GM12878 (cell line): ENCODE measurements at regions of chr18 and their contacts with region 1.

Region 1: DNA sequence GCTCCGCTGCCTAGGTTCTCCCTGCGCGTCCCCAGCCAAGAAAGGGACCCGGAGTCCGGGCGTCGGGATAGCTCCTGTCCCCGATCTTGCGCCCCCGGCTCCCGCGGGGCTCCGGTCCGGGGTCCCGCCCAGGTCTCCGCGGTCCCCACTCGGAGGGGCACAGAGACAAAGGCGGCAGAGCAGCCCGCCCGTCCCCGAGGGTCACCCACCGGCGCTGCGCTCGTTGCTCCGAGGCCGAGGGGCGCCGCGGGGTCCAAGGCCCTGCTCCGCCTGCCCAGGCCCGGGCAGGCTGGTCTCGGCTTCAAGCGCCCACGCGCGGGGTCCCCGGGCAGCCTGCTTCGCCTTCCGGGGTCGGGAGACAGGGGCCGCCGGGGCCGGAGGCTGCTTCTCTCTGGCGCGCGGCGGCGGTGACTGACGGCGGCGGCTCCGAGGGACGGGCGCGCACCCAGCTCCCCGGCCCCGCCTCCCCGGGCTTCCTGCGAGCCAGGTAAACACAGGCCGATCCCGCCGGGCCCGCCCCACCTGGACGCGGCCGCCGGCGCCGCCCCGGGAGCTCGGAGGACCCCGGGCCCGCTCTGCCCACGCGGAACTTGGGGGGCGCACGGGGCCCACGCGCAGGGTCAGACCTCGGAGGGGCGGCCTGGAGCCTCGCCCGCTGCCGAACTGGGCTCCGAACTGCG is at the start of gene MBP:
- DNase-seq: no peak
- ATAC-seq: peak; percentile 67
- H3K4me3 ChIP-seq: peak within 1 kb of the TSS; percentile 98
- H3K27ac ChIP-seq: peak within 1 kb of the TSS; percentile 97
- H3K4me1 ChIP-seq: peaks cover 33% of the 10 kb centered on the region
- H3K27me3 ChIP-seq: no peaks in the 10 kb centered on the region
- CTCF ChIP-seq: no peak
- EP300 ChIP-seq: no peak
- POLR2A ChIP-seq: peak; percentile 82
- RAD21 ChIP-seq: no peak
- polyA plus RNA-seq, gene MBP: 12.2 to 13.3 TPM

Region 2: DNA sequence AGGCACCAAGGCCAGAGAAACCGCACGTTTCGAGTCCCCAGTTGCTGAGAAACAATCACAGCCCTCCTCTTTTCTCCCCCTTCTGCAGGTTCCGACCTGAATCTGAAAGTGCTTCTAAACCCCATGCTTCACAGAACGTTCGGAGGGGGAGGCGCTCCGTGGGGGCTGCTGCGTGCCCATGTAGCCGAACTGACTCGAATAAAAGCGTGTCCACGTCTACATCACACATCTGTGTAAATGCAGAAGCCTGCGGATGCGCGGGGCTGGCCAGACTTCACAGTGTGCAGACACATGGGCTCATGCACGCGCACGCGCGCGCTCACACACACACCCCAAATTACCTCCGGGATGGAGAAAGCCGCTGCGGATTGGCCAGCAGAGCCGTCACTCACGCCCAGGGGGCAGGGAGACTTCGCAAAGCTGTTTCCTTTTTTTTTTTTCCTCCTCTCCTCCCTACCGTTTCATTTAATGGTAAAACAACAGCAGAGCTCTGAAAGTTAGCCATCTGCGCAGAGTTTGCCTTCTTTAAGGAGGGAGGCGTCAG is 639.8 kb before region 1 on chr18:
- CTCF ChIA-PET with region 1: no interaction called
- POLR2A ChIA-PET with region 1: no interaction called
- RAD21 ChIA-PET with region 1: no interaction called
- SMC1A ChIA-PET with region 1: no interaction called
- in situ Hi-C with region 1: no loop called
- intact Hi-C with region 1: loop called (anchors 10 kb)
- DNase-seq: peak; percentile 94
- ATAC-seq: peak; percentile 80
- H3K4me3 ChIP-seq: peak overlapping the region; percentile 79
- H3K27ac ChIP-seq: peak overlapping the region; percentile 79
- H3K4me1 ChIP-seq: peaks cover 9% of the 10 kb centered on the region; the same call in 1 of the 2 replicates
- H3K27me3 ChIP-seq: no peaks in the 10 kb centered on the region
- CTCF ChIP-seq: no peak
- EP300 ChIP-seq: no peak
- POLR2A ChIP-seq: no peak; the same call in 1 of the 2 replicates
- RAD21 ChIP-seq: no peak

Region 3: GRCh38 chr18:77000527-77000926 is 132.0 kb before region 1 on chr18:
- CTCF ChIA-PET with region 1: interaction called, 5 read pairs
- POLR2A ChIA-PET with region 1: no interaction called
- RAD21 ChIA-PET with region 1: interaction called, 7 read pairs
- SMC1A ChIA-PET with region 1: interaction called, 3 read pairs
- in situ Hi-C with region 1: no loop called
- intact Hi-C with region 1: loop called (anchors 5 kb)
- DNase-seq: no peak
- ATAC-seq: peak; percentile 69
- H3K4me3 ChIP-seq: no peak overlapping the region
- H3K27ac ChIP-seq: no peak overlapping the region
- H3K4me1 ChIP-seq: no peaks in the 10 kb centered on the region
- H3K27me3 ChIP-seq: no peaks in the 10 kb centered on the region
- CTCF ChIP-seq: peak; percentile 91 to 98 (median 97)
- EP300 ChIP-seq: no peak
- POLR2A ChIP-seq: no peak
- RAD21 ChIP-seq: peak; percentile 92

Region 4: GRCh38 chr18:77061946-77062517 is 70.5 kb before region 1 on chr18:
- CTCF ChIA-PET with region 1: interaction called, 5 read pairs
- POLR2A ChIA-PET with region 1: interaction called, 8 read pairs
- RAD21 ChIA-PET with region 1: interaction called, 21 read pairs
- SMC1A ChIA-PET with region 1: interaction called, 69 read pairs
- in situ Hi-C with region 1: loop called (anchors 10 kb)
- intact Hi-C with region 1: loop called (anchors 1 kb)
- DNase-seq: no peak
- ATAC-seq: peak; percentile 65
- H3K4me3 ChIP-seq: peak overlapping the region; percentile 2; the same call in 1 of the 2 replicates
- H3K27ac ChIP-seq: peak overlapping the region; percentile 97
- H3K4me1 ChIP-seq: peaks cover 61% of the 10 kb centered on the region
- H3K27me3 ChIP-seq: no peaks in the 10 kb centered on the region
- CTCF ChIP-seq: peak in 2 of 3 experiments; percentile 16 to 26; a peak in 2 of 6 replicates
- EP300 ChIP-seq: no peak
- POLR2A ChIP-seq: no peak; the same call in 1 of the 2 replicates
- RAD21 ChIP-seq: peak; percentile 24; the same call in 1 of the 2 replicates

Region 5: DNA sequence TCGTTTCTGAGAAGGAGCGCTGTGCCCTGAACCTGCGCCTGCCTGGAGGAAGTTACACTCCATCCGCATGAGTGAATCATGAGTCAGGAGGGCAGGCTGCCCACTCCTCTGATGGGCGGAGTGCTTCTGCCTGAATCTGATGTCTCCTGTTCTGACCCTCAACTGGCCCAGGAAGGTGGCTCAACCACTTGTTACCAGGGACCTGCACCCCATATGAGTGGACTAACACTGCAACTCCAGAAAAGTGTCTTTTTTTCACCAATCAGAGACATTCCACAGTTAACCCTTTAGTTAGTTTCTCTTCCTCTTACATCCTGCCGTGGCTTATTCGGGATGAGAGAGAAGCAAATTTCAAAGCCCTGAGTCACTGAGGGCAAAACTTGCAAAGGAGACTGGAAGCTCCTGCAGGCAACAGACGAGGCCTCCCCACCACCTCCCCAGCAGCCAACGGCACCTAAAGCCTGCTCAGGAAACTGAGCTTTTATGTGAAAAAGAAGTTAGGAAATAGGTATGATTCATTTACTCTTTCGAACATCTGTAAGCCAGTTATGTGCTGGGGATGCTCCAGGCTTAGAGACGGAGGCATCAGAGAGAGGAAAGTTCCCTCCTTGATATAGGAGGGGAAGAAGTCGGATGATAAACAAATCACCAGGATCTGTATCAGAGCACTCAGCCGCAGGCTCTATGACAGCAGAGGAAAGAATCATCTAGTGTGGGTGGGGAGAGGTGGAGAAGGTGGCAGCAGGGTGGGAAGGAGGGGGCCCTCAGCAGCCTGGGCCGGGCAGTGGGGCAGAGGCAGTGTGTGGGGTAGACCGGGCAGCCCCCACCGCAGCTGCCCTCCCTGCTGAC is 30.9 kb before region 1 on chr18:
- CTCF ChIA-PET with region 1: interaction called, 17 read pairs
- POLR2A ChIA-PET with region 1: interaction called, 45 read pairs
- RAD21 ChIA-PET with region 1: interaction called, 73 read pairs
- SMC1A ChIA-PET with region 1: interaction called, 27 read pairs
- in situ Hi-C with region 1: no loop called
- intact Hi-C with region 1: loop called (anchors 1 kb)
- DNase-seq: peak; percentile 61
- ATAC-seq: peak; percentile 86
- H3K4me3 ChIP-seq: peak overlapping the region; percentile 56
- H3K27ac ChIP-seq: peak overlapping the region; percentile 99
- H3K4me1 ChIP-seq: peaks cover 80% of the 10 kb centered on the region
- H3K27me3 ChIP-seq: no peaks in the 10 kb centered on the region
- CTCF ChIP-seq: no peak
- EP300 ChIP-seq: 0 out of 4 replicates have a peak, but pooled peaks of 1 of the 2 experiments have one; percentile 52
- POLR2A ChIP-seq: peak; percentile 56
- RAD21 ChIP-seq: no peak

Region 6: DNA sequence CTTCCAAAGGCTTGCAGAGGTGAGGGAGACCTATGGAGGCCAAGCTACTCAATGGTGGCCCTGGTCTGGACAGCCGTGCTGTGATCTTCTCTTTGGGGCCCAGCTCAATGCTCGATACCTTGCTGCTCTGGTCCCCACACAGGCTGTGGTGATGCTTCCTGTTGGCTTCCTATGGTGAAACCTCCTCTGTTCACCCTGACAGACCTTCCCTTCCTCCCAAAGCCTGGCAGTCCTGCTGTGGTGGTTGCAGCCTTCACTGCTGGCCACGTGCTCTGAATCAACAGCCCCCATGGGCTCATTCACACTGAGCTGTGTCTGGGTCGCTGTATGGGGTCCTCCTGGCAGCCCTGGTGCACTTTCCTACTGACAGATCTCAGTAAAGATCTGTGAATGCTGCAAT is 86.1 kb after region 1 on chr18:
- CTCF ChIA-PET with region 1: no interaction called
- POLR2A ChIA-PET with region 1: no interaction called
- RAD21 ChIA-PET with region 1: no interaction called
- SMC1A ChIA-PET with region 1: no interaction called
- in situ Hi-C with region 1: no loop called
- intact Hi-C with region 1: no loop called
- DNase-seq: no peak
- ATAC-seq: no peak
- H3K4me3 ChIP-seq: no peak overlapping the region
- H3K27ac ChIP-seq: no peak overlapping the region
- H3K4me1 ChIP-seq: no peaks in the 10 kb centered on the region
- H3K27me3 ChIP-seq: no peaks in the 10 kb centered on the region; a peak in 1 of 4 replicates
- CTCF ChIP-seq: no peak
- EP300 ChIP-seq: no peak
- POLR2A ChIP-seq: no peak
- RAD21 ChIP-seq: no peak

Region 7: DNA sequence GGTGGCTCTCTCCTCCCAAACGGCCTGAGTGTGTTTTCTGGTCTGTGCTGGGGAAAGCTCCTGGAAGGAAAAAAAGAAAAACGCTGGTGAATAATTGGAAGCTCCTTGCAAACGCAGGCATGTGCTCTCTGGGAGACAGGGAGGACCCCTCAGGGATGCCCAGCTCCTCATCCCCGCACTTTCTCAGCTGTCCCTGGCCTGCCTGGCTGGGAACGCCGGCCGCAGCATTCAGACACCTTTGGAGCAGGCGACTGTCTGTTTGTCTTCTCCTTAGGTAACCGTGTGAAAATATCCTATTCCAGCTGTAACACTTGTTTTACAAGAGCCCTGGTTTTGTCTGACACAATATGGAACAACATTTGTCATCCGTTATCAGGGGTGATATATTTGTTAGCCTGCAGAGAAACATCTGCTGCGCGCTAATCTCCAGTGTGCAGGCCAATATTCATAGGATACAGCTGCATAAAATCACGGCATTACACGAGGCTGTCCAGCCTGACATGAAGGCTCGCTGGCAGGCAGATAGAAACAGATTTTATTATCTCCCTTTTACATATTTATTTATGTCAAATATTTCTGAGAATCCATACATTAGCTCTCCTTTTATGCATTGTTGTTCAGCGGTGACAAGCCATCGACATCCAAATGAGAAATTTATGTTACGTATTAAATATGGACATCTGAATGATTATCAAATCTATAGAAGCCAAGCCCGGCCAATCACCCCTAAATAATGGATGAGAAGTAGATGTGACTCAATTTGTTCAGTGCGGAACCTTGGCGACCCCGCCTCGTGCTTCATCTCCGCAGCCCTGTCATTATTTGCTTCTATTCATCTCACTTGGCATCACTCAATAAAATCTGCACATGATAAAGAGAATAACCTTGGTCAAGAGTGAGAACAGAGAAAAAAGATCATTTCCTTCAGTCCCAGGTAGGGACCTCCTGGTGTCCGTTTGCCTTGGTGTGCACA is 1172.0 kb after region 1 on chr18:
- CTCF ChIA-PET with region 1: no interaction called
- POLR2A ChIA-PET with region 1: no interaction called
- RAD21 ChIA-PET with region 1: no interaction called
- SMC1A ChIA-PET with region 1: no interaction called
- in situ Hi-C with region 1: no loop called
- intact Hi-C with region 1: no loop called
- DNase-seq: no peak
- ATAC-seq: no peak
- H3K4me3 ChIP-seq: no peak overlapping the region
- H3K27ac ChIP-seq: no peak overlapping the region
- H3K4me1 ChIP-seq: no peaks in the 10 kb centered on the region
- H3K27me3 ChIP-seq: no peaks in the 10 kb centered on the region
- CTCF ChIP-seq: no peak
- EP300 ChIP-seq: no peak
- POLR2A ChIP-seq: no peak
- RAD21 ChIP-seq: no peak